ENCODE measurements at regions of chrX and their contacts with region 1.

Region 1: DNA sequence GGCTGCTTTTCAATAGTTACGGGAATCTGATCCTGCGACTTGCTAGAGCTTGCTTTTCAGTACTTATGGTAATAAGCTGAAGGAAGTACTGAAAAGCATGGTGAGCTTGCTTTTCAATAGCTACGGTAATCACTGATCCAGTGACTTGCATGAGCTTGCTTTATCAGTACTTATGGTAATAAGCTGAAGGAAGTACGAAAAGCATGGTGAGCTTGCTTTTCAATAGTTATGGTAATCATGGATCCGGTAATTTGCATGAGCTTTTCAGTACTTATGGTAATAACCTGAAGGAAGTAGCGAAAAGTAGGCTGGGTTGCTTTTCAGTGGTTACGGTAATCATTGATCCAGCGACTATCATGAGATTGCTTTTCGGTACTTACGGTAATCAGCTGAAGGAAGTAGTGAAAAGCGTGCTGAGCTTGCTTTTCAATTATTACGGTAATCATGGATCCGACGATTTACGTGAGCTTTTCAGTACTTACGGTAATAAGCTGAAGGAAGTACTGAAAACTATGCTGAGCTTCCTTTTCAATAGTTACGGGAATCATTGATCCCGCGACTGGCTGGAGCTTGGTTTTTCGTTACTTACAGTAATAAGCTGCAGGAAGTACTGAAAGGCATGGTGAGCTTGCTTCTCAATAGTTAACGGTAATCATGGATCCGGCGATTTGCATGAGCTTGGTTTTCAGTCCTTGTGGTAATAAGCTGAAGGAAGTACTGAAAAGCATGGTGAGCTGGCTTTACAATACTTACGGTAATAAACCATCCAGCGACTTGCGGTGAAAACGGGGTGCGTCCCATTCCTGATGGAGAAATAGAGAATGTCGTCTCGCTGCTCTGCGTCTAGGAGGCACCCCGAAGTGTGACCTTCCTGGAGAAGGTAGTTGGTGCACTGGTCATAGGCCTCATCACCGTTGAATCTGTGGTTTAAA is 6.5 kb downstream of the CRLF2 start:
- DNase-seq: peak; percentile 46
- ATAC-seq: peak; percentile 53
- H3K4me3 Mint-ChIP-seq: peak overlapping the region; percentile 67
- H3K27ac Mint-ChIP-seq: peak overlapping the region; percentile 42
- H3K4me1 Mint-ChIP-seq: peaks cover 29% of the 10 kb centered on the region
- H3K27me3 Mint-ChIP-seq: peaks cover 4% of the 10 kb centered on the region

Region 2: DNA sequence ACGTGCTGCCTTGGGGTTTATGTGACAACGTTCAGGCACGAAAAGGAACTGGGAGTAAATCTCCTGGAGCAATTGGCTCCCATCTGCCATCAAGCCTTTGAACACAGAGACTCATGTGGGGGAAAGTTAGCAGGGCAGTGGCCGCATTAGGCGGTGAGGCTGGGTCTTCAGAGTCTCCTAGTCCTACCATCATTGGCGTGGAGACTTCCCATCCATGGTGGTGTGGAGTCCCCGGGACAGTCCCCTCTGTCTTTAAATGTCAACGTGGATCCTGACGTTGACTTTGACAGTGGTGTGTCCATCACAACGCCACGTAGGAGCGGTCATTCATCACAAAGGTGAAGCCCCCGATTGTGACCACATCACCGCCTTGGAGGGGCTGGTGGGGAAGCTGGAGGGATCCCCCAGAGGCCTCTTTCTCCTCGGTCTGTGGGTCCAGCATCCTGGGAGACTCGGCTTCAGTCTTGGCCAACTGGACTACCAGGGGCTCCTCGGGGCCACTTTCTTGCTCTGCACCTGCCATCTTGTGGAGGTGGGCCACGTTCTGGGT is 15.3 kb before region 1 on chrX:
- CTCF ChIA-PET with region 1: no interaction called
- POLR2A ChIA-PET with region 1: no interaction called
- intact Hi-C with region 1: no loop called
- DNase-seq: no peak
- ATAC-seq: no peak
- H3K4me3 Mint-ChIP-seq: no peak overlapping the region
- H3K27ac Mint-ChIP-seq: no peak overlapping the region
- H3K4me1 Mint-ChIP-seq: no peaks in the 10 kb centered on the region
- H3K27me3 Mint-ChIP-seq: no peaks in the 10 kb centered on the region

Region 3: GRCh38 chrX:1224954-1225353 is 19.0 kb after region 1 on chrX:
- CTCF ChIA-PET with region 1: no interaction called
- POLR2A ChIA-PET with region 1: no interaction called
- intact Hi-C with region 1: loop called in 1 of 2 experiments (anchors 1 kb)
- DNase-seq: no peak
- ATAC-seq: peak; percentile 88
- H3K4me3 Mint-ChIP-seq: no peak overlapping the region
- H3K27ac Mint-ChIP-seq: no peak overlapping the region
- H3K4me1 Mint-ChIP-seq: peaks cover 16% of the 10 kb centered on the region
- H3K27me3 Mint-ChIP-seq: no peaks in the 10 kb centered on the region

Measured in activated CD4-positive, alpha-beta T cell treated with anti-CD3 and anti-CD28 coated beads for 36 hours (primary cell).